AG04450 (cell line): ENCODE measurements at regions of chr20 and their contacts with region 1.

Region 1: DNA sequence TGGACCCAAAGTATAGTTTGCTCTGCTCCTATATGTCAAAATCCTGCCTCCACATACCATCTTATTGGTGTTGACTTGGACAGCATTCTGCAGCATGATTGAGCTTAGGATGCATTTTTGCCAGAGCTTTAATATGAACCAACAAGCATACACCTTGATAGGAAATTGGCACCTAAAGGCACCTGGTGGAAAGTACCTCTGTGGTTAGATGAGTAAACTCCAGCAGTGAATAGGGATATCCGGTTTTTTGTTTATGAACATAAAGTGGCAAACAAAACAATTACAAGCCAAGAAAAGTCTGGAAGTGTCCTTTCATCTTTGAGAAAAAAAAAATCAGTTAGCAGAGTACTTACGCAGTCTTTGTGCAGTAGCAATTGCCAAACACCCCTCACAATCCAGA is 6.2 kb upstream of the CYP24A1 start:
- DNase-seq: no peak
- H3K4me3 ChIP-seq: no peak overlapping the region
- H3K27ac ChIP-seq: no peak overlapping the region
- H3K27me3 ChIP-seq: peaks cover 11% of the 10 kb centered on the region
- CTCF ChIP-seq: no peak

Region 2: GRCh38 chr20:54199721-54200176 is 19.8 kb after region 1 on chr20:
- CTCF ChIA-PET with region 1: interaction called, 18 read pairs
- POLR2A ChIA-PET with region 1: no interaction called
- DNase-seq: peak; percentile 56
- H3K4me3 ChIP-seq: no peak overlapping the region
- H3K27ac ChIP-seq: no peak overlapping the region
- H3K27me3 ChIP-seq: peaks cover 12% of the 10 kb centered on the region
- CTCF ChIP-seq: peak; percentile 97

Region 3: DNA sequence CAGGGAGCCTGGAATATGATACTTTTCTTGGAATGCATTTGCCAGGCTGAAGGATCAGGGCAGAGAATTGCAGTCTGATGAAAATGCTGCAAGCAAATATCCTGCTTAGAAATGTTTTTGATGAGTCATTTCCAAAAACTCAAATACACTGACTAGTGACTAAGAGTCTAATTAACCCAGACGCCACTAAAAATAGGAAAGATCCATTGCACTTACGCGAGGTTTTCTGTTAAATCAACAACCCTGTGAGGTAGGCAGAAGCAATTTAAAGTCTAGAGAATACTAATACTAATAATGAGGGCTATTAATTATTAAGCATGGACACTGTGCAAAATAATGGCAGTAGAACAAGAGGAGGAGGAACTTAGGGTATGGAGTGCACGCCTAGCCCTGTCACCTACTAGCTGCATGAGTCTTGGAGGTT is 165.4 kb after region 1 on chr20:
- CTCF ChIA-PET with region 1: no interaction called
- POLR2A ChIA-PET with region 1: no interaction called
- DNase-seq: peak; percentile 59
- H3K4me3 ChIP-seq: no peak overlapping the region
- H3K27ac ChIP-seq: no peak overlapping the region
- H3K27me3 ChIP-seq: no peaks in the 10 kb centered on the region
- CTCF ChIP-seq: no peak